ENCODE measurements at regions of chr6 and their contacts with region 1.

Region 1: GRCh38 chr6:111993342-111993741 is 60.6 kb upstream of the CCN6 start:
- DNase-seq: no peak
- H3K27ac ChIP-seq: no peak overlapping the region
- CTCF ChIP-seq: no peak

Region 2: DNA sequence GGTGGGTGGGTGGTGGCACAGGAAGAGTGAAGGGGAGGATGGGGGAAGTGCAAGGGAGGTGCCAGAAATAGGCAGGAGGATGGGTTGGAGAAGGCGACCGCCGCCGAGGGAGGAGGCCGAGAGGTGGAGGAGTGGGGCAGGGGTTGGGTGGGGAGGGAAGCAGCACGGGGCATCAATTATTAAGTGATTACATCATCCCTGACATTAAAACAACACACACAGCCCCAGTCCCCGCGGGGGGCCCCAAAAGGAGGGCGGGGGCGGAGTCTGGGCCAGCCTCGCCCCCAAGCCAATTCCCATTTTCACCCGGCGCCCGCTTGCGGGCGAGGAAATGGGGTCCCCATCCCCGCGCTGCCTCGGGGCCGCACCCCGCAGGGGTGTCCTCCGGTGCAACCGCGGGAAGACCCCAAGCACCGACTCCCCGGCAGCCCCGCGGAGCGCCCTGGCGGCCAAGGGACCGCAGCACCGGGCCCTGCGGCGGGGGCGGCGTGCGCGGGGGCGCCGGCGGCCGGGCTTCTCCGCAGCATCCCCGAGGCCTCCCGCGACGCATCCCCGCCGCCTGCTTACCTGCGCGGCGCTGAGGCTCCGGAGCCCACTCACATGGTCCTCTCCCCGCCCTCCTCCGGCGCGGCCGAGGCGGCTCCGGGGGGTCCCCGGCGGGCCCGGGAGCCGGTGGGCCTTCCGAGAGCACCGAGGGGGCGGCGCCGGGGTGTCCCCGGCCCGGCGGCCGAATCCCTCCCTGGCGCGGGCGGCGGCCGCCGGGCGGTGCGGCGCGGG is 120.8 kb before region 1 on chr6:
- CTCF ChIA-PET with region 1: interaction called, 10 read pairs
- POLR2A ChIA-PET with region 1: no interaction called
- DNase-seq: no peak
- H3K27ac ChIP-seq: no peak overlapping the region
- CTCF ChIP-seq: no peak